ENCODE measurements at regions of chr3 and their contacts with region 1.

Region 1: DNA sequence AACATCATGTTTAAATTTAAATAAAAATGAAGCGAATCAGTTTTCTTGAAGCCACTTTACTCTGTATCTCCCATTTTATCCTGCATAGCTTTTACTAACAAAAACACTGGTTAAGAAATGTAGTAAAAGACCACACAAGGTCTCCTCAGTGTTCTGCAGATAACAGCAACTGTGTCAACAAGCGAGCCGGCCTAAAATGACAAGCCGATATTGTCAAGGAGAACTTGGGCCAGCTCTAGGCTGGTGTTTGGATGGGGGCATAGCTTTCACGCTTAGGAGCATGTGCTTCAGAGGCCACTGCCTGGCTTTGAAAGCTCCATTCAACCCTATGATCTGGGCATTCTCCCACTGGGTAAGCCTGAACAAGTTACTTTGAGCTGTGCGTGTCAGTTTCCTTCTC is 38.1 kb downstream of the MFSD1 start:
- H3K4me3 ChIP-seq: no peak overlapping the region
- H3K27ac ChIP-seq: no peak overlapping the region
- H3K4me1 ChIP-seq: no peaks in the 10 kb centered on the region
- CTCF ChIP-seq: no peak

Region 2: GRCh38 chr3:158617982-158618875 is 221.7 kb before region 1 on chr3:
- CTCF ChIA-PET with region 1: no interaction called
- POLR2A ChIA-PET with region 1: no interaction called
- H3K4me3 ChIP-seq: no peak overlapping the region
- H3K27ac ChIP-seq: no peak overlapping the region
- H3K4me1 ChIP-seq: no peaks in the 10 kb centered on the region
- CTCF ChIP-seq: no peak

Region 3: GRCh38 chr3:159260049-159260662 is 420.2 kb after region 1 on chr3:
- CTCF ChIA-PET with region 1: interaction called, 82 read pairs
- POLR2A ChIA-PET with region 1: no interaction called
- H3K4me3 ChIP-seq: no peak overlapping the region
- H3K27ac ChIP-seq: no peak overlapping the region
- H3K4me1 ChIP-seq: no peaks in the 10 kb centered on the region; the same call in 1 of the 2 replicates
- CTCF ChIP-seq: peak; percentile 40; the same call in 1 of the 2 replicates